ENCODE measurements at regions of chr6 and their contacts with region 1.

Region 1: DNA sequence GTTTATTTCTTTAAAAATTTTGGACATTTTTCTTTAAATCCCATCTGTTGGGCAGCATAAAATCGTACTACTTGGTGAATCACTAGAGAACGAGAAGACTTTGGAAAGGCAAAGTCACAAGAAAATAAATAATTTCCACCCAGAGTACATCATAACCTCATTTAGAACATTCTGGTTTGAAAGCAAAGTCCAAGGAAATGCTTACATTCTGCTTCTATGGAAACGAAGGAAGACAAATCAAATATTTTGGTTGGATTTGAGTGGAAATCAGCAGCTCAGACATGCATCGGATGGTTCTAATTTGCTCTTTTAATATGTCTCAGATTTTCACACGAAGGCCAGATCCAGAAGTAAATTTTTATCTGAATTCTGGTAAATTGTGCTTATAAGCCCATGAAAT is 60.7 kb upstream of the LTV1 start:
- DNase-seq: no peak
- ATAC-seq: no peak
- H3K4me3 ChIP-seq: no peak overlapping the region
- H3K4me3 Mint-ChIP-seq: no peak overlapping the region
- H3K27ac ChIP-seq: no peak overlapping the region
- H3K27ac Mint-ChIP-seq: no peak overlapping the region
- H3K4me1 ChIP-seq: no peaks in the 10 kb centered on the region
- H3K4me1 Mint-ChIP-seq: no peaks in the 10 kb centered on the region
- H3K27me3 ChIP-seq: peaks cover 0 to 2% of the 10 kb centered on the region in 2 experiments
- H3K27me3 Mint-ChIP-seq: no peaks in the 10 kb centered on the region

Region 2: GRCh38 chr6:144377586-144378210 is 595.2 kb after region 1 on chr6:
- CTCF ChIA-PET with region 1: interaction called in 1 of 2 experiments, 11 read pairs
- POLR2A ChIA-PET with region 1: no interaction called
- DNase-seq: peak in 1 of 35 experiments; percentile 7
- ATAC-seq: no peak
- H3K4me3 ChIP-seq: no peak overlapping the region
- H3K4me3 Mint-ChIP-seq: peak overlapping the region in 1 of 3 donors; percentile 9
- H3K27ac ChIP-seq: no peak overlapping the region
- H3K27ac Mint-ChIP-seq: peak overlapping the region; percentile 9 to 67
- H3K4me1 ChIP-seq: peaks cover 4 to 21% of the 10 kb centered on the region in 2 experiments
- H3K4me1 Mint-ChIP-seq: peaks cover 68 to 77% (median 69%) of the 10 kb centered on the region in 3 donors
- H3K27me3 ChIP-seq: no peaks in the 10 kb centered on the region
- H3K27me3 Mint-ChIP-seq: no peaks in the 10 kb centered on the region